ENCODE measurements at regions of chr17 and their contacts with region 1.

Region 1: DNA sequence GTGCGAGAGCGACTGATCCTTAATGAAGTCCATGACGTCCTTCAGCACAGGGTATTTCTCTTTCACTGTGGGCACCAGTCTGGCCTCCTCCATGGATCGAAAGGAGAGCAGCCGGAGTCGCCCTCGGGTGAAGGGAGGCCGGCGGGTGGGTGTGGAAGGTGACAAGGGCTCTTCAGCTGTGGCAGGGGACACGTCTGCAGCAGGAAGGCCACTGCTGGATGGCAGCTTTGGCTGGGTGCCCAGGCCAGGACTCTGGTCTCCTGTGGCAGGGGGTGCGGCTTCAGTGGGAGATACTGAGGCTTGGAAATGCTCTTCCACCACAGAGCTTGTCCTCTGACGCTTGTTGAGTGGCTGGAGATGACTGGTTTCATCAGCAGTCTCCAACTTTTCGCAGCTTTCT is 78.5 kb downstream of the ZZEF1 start:
- DNase-seq: no peak
- H3K4me3 ChIP-seq: no peak overlapping the region
- H3K27ac ChIP-seq: no peak overlapping the region
- H3K4me1 ChIP-seq: no peaks in the 10 kb centered on the region
- H3K27me3 ChIP-seq: no peaks in the 10 kb centered on the region
- CTCF ChIP-seq: no peak
- POLR2A ChIP-seq: no peak

Region 2: GRCh38 chr17:3865176-3865575 is 199.2 kb before region 1 on chr17:
- intact Hi-C with region 1: loop called (anchors 10 kb)
- DNase-seq: peak; percentile 78 to 91
- H3K4me3 ChIP-seq: no peak overlapping the region
- H3K27ac ChIP-seq: peak overlapping the region in 1 of 3 donors; percentile 45
- H3K4me1 ChIP-seq: peaks cover 0 to 9% of the 10 kb centered on the region in 2 donors
- H3K27me3 ChIP-seq: no peaks in the 10 kb centered on the region
- CTCF ChIP-seq: no peak
- POLR2A ChIP-seq: no peak

Region 3: GRCh38 chr17:3927628-3928340 is 136.6 kb before region 1 on chr17:
- intact Hi-C with region 1: no loop called
- DNase-seq: no peak
- H3K4me3 ChIP-seq: no peak overlapping the region
- H3K27ac ChIP-seq: no peak overlapping the region
- H3K4me1 ChIP-seq: peaks cover 0 to 11% of the 10 kb centered on the region in 2 donors
- H3K27me3 ChIP-seq: no peaks in the 10 kb centered on the region
- CTCF ChIP-seq: no peak
- POLR2A ChIP-seq: no peak

Region 4: DNA sequence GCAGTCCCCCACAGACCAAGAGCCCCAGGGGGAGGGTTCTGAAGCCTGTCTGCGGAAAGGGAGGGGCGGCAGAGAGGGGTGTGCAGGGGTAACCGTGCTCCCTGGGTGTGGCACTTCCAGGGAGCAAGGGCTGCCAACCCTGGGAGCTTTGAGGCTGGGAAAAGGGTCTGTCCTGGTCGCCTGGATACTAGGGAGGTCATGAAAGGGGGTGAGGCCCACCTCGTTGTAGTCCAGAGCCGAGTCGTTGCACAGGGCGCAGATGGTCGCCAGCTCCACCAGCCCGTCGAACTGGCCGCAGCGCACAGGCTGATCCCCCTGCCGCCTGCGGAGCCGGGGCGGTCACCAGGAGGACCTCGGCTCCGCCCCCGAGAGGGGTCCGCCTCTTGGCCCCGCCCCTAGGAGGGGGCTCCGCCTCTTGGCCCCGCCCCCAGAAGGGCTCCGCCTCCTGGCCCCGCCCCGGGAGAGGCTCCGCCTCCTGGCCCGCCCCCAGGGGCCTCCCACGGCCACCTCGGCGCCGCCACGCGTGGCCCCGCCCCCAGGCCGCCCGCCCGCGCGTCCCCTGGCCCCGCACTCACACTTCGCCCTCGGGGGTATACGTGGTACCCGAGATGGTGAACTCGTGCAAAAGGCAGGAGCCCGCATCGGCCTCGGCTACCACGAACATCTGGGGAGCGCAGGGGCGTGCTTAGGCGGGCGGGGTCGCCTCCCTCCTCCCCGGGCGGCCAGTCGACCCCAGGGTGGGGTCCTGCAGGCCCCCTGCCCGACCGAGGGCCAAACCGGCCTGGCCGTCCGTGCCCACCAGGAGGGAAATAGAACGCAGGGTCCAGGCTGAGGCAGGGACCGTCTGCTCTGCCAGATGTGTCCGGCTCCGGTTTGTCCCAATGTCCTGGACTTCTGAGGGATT is 119.6 kb before region 1 on chr17:
- intact Hi-C with region 1: no loop called
- DNase-seq: peak; percentile 26 to 27
- H3K4me3 ChIP-seq: no peak overlapping the region
- H3K27ac ChIP-seq: peak overlapping the region in 1 of 3 donors; percentile 17
- H3K4me1 ChIP-seq: peaks cover 0 to 9% of the 10 kb centered on the region in 2 donors
- H3K27me3 ChIP-seq: no peaks in the 10 kb centered on the region
- CTCF ChIP-seq: no peak
- POLR2A ChIP-seq: no peak

Region 5: DNA sequence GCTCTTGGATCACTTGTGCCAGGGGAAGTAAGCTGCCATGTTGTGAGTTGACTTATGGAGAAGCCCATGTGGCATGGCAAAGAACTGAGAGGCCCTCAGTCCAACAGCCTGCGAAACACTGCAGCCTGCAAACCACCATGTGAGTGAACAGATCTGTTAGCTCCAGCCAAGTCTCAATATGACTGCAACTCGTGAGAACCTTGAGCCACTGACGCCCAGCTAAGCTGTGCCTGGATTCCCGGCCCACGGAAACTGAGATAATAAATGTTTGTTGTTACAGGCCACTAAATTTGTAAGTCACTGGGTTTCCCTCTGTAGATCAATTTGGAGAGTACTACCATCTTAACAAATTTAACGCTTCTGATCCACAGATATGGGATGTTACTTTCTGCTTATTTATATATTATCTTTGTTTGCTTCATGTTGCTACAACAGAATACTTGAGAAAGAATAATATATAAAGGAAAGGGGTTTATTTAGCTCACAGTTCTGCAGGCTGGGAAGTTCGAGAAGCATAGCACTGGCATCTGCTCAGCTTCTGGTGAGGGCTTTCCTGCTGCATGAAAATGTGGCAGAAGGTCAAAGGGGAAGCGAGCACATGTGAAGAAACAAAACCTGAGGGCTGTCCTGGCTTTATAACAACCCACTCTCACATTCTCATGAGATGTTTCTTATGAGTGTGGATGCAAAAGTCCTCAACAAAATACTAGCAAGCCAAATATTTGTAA is 70.7 kb before region 1 on chr17:
- intact Hi-C with region 1: no loop called
- DNase-seq: no peak
- H3K4me3 ChIP-seq: no peak overlapping the region
- H3K27ac ChIP-seq: no peak overlapping the region
- H3K4me1 ChIP-seq: peaks cover 0 to 8% of the 10 kb centered on the region in 2 donors
- H3K27me3 ChIP-seq: no peaks in the 10 kb centered on the region
- CTCF ChIP-seq: no peak
- POLR2A ChIP-seq: no peak

Measured in thyroid gland (tissue), 4 donors.